ENCODE measurements at regions of chr15 and their contacts with region 1.

Region 1: DNA sequence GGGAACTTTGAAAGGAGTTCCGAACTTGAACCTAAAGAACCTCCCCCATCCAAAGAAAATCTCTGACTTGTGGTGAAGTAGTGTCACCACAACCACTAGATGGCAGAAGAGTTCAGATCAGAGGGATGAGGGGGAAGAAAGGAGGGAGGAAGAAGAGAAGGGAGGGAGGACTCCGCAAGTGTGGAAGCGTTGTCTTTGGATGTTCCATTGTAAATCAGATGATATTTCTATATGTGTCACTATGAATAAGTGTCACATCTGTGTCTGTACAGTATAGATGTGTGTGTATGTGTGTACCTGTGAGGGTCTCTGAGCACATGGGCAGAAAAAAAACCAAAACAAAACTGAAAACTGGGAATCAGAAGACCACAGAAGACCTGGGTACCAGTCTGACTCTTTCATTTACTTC is 16.9 kb downstream of the SLC24A1 start:
- DNase-seq: peak; percentile 81
- ATAC-seq: peak; percentile 92
- H3K4me3 ChIP-seq: no peak overlapping the region
- H3K27ac ChIP-seq: no peak overlapping the region
- H3K4me1 ChIP-seq: peaks cover 5% of the 10 kb centered on the region; the same call in 1 of the 2 replicates
- H3K27me3 ChIP-seq: no peaks in the 10 kb centered on the region
- CTCF ChIP-seq: peak; percentile 90
- POLR2A ChIP-seq: no peak
- RAD21 ChIP-seq: peak; percentile 84

Region 2: DNA sequence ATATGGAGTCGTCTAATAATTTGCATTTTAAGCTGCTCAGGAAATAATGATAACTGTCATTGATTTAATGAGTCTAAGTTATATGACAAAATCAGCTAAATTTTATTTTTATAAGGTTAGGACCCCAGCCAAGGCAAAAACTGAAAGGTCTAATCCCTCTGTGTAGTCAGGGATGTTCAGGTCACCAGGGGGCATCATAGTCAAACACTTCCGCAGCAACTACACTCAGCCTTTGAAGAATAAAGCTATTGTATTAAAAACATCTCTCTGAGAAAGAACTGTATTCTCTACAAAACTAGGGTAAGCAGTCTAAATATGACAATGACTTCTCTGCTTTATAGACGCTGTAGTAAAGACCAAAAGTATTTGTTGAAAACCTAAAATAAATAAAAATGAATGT is 42.7 kb before region 1 on chr15:
- CTCF ChIA-PET with region 1: no interaction called
- POLR2A ChIA-PET with region 1: no interaction called
- dilution Hi-C with region 1: no loop called
- in situ Hi-C with region 1: no loop called
- intact Hi-C with region 1: no loop called
- DNase-seq: no peak
- ATAC-seq: no peak
- H3K4me3 ChIP-seq: no peak overlapping the region
- H3K27ac ChIP-seq: no peak overlapping the region
- H3K4me1 ChIP-seq: no peaks in the 10 kb centered on the region
- H3K27me3 ChIP-seq: no peaks in the 10 kb centered on the region
- CTCF ChIP-seq: peak; percentile 31
- POLR2A ChIP-seq: no peak
- RAD21 ChIP-seq: peak; percentile 38

Region 3: DNA sequence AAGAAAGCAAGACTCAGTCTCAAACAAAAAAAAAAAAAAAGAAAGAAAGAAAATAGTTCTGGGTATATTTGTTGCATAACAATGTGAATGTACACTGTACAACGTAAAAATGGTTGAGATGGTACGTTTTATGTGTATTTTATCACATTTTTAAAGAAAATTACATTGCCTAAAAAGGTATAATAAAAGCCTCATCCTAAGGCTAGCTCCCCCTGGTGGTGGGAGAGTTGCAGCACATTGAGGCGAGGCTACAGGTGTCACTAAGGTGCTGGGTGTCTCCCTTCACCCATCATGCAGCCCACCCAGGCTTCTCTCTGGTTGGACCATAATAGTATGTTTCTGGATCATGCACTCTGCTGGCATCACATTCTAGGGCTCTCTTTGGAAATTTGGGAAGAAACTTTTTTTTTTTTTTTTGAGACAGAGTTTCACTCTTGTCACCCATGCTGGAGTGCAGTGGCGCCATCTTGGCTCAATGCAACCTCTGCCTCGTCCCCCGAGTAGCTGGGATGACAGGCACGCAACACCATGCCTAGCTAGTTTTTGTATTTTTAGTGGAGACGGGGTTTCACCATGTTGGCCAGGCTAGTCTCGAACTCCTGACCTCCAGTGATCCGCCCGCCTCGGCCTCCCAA is 218.3 kb after region 1 on chr15:
- CTCF ChIA-PET with region 1: no interaction called
- POLR2A ChIA-PET with region 1: no interaction called
- dilution Hi-C with region 1: no loop called
- in situ Hi-C with region 1: no loop called
- intact Hi-C with region 1: loop called (anchors 2 kb)
- DNase-seq: peak; percentile 53
- ATAC-seq: no peak; the same call in 1 of the 2 replicates
- H3K4me3 ChIP-seq: no peak overlapping the region
- H3K27ac ChIP-seq: no peak overlapping the region
- H3K4me1 ChIP-seq: no peaks in the 10 kb centered on the region
- H3K27me3 ChIP-seq: peaks cover 1% of the 10 kb centered on the region; the same call in 1 of the 2 replicates
- CTCF ChIP-seq: peak; percentile 68
- POLR2A ChIP-seq: no peak
- RAD21 ChIP-seq: peak; percentile 73

Region 4: GRCh38 chr15:65869127-65869953 is 230.7 kb after region 1 on chr15 and contains the start of gene RAB11A:
- CTCF ChIA-PET with region 1: interaction called, 6 read pairs
- POLR2A ChIA-PET with region 1: no interaction called
- dilution Hi-C with region 1: no loop called
- in situ Hi-C with region 1: no loop called
- intact Hi-C with region 1: loop called (anchors 1 kb)
- DNase-seq: peak; percentile 96
- ATAC-seq: peak; percentile 92
- H3K4me3 ChIP-seq: peak within 1 kb of the TSS; percentile 58
- H3K27ac ChIP-seq: peak within 1 kb of the TSS; percentile 91
- H3K4me1 ChIP-seq: no peaks in the 10 kb centered on the region
- H3K27me3 ChIP-seq: no peaks in the 10 kb centered on the region
- CTCF ChIP-seq: peak; percentile 40
- POLR2A ChIP-seq: peak; percentile 99
- RAD21 ChIP-seq: no peak; the same call in 1 of the 2 replicates
- total RNA-seq, gene RAB11A: 376 and 462 TPM in 2 replicates

Region 5: DNA sequence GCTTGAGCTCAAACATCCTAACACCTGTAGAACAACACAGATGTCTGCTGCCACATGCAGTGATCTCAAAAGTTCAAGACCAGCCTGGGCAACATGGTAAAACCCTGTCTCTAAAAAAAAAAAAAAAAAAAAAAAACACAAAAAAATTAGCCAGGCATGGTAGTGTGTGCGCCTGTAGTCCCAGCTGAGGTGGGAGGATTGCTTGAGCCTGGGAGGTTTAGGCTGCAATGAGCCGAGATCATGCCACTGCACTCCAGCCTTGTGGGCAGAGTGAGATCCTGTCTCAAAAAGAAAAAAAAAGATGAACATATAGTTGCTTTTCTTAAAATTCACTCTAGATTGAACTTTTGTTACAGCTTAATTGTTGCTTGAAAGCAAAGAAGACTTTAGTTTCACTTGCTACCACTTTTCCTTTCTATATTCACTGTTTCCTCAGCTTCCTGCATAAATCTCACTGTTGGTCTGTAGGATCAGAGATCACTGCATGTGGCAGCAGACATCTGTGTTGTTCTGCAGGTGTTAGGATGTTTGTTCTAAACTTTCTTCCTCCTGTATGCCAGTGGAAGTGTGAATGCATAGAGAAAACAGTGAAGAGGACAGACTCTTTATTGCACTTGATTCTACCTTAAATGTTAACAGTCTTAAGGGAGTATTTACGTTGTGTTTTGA is 243.2 kb after region 1 on chr15:
- CTCF ChIA-PET with region 1: no interaction called
- POLR2A ChIA-PET with region 1: interaction called, 20 read pairs
- dilution Hi-C with region 1: no loop called
- in situ Hi-C with region 1: no loop called
- intact Hi-C with region 1: no loop called
- DNase-seq: no peak
- ATAC-seq: no peak
- H3K4me3 ChIP-seq: no peak overlapping the region
- H3K27ac ChIP-seq: no peak overlapping the region
- H3K4me1 ChIP-seq: no peaks in the 10 kb centered on the region; the same call in 1 of the 2 replicates
- H3K27me3 ChIP-seq: no peaks in the 10 kb centered on the region
- CTCF ChIP-seq: no peak
- POLR2A ChIP-seq: no peak
- RAD21 ChIP-seq: no peak

Region 6: DNA sequence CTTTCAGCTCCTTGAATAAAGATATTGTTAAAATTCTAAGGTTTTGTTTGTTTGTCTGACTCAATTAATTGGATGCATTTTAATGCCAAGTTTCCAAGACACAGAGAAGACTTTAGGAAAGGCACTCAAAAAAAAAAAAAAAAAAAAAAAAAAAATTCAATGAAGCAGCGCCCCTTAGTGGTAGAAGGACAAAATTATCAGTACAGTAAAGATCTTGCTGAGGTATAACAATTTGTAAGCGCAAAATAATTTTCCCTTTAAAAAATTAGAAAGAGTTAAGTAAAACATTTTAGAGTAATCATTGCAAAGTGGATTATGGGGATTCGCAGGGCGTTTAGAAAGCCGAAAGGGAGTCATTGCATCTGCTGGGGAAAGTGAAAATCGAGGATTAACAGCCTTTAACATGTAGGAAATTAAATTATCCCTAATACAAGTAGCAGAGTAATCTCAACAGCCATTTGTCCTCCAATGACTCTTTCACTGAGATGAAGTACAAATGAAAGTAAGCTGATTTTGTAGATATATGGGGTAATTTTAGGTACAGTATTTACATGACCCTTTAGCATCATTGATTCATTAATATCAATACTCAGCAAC is 648.9 kb after region 1 on chr15:
- CTCF ChIA-PET with region 1: no interaction called
- POLR2A ChIA-PET with region 1: no interaction called
- dilution Hi-C with region 1: no loop called
- in situ Hi-C with region 1: no loop called
- intact Hi-C with region 1: loop called (anchors 10 kb)
- DNase-seq: peak; percentile 14
- ATAC-seq: no peak
- H3K4me3 ChIP-seq: no peak overlapping the region
- H3K27ac ChIP-seq: no peak overlapping the region
- H3K4me1 ChIP-seq: peaks cover 5% of the 10 kb centered on the region; the same call in 1 of the 2 replicates
- H3K27me3 ChIP-seq: peaks cover 5% of the 10 kb centered on the region
- CTCF ChIP-seq: peak; percentile 60
- POLR2A ChIP-seq: no peak
- RAD21 ChIP-seq: peak; percentile 43

Measured in IMR-90 (cell line).